Activated T-helper 2 cell treated with anti-CD3 and anti-CD28 coated beads, Interferon-gamma antibody, Interleukin-2, Interleukin-4, amounts not matched to agents 10 μg/mL and 5 μg/mL and 100 μg/mL, durations not matched to agents 14 hours and 24 hours and 36 hours (primary cell): ENCODE measurements at regions of chr12 and their contacts with region 1.

Region 1: GRCh38 chr12:52032804-52033502 is 18.3 kb upstream of the NR4A1 start:
- DNase-seq: peak; percentile 88
- H3K4me3 Mint-ChIP-seq: peak overlapping the region; percentile 73
- H3K27ac Mint-ChIP-seq: peak overlapping the region; percentile 81
- H3K4me1 Mint-ChIP-seq: peaks cover 34% of the 10 kb centered on the region
- H3K27me3 Mint-ChIP-seq: peaks cover 6% of the 10 kb centered on the region

Region 2: DNA sequence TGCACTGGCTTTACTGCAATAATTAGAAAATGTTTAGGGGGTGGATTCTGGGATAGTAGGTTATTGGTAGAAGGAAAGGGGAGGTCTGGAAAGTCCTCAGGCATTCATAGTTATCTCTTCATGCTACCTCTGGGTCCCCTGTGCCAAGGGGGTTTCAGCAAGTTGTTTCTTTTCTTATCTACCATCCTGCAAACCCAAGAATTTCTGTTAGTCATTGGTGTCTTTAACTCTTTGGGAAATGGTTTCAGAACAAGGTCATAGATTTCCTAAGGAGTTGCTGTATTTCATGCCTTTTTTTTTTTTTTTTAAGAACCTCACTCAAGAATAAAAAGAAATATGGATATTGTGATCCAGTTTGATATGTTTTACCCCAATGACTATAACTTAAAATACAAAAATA is 544.7 kb before region 1 on chr12:
- intact Hi-C with region 1: no loop called
- DNase-seq: no peak
- H3K4me3 Mint-ChIP-seq: no peak overlapping the region
- H3K27ac Mint-ChIP-seq: no peak overlapping the region
- H3K4me1 Mint-ChIP-seq: peaks cover 16% of the 10 kb centered on the region
- H3K27me3 Mint-ChIP-seq: no peaks in the 10 kb centered on the region

Region 3: DNA sequence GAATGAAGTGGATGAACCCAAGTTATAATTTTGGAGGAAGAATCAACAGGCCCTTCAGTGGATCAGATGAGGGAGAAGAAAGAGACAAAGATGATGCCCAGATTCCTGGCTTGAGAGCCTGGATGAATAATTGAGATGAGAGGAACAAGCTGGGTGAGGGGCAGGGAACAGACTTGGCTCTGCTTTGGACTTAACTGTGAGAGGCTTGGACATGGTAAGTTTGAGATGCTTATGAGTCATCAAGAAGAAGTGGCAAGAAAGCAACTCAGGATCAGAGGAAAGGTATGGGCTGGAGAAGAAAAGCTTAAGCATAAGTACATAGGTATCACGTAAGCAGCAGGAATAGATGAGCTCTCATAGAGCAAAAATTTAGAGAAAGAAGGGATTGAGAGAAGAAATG is 239.8 kb before region 1 on chr12:
- intact Hi-C with region 1: no loop called
- DNase-seq: no peak
- H3K4me3 Mint-ChIP-seq: no peak overlapping the region
- H3K27ac Mint-ChIP-seq: no peak overlapping the region
- H3K4me1 Mint-ChIP-seq: no peaks in the 10 kb centered on the region
- H3K27me3 Mint-ChIP-seq: no peaks in the 10 kb centered on the region

Region 4: DNA sequence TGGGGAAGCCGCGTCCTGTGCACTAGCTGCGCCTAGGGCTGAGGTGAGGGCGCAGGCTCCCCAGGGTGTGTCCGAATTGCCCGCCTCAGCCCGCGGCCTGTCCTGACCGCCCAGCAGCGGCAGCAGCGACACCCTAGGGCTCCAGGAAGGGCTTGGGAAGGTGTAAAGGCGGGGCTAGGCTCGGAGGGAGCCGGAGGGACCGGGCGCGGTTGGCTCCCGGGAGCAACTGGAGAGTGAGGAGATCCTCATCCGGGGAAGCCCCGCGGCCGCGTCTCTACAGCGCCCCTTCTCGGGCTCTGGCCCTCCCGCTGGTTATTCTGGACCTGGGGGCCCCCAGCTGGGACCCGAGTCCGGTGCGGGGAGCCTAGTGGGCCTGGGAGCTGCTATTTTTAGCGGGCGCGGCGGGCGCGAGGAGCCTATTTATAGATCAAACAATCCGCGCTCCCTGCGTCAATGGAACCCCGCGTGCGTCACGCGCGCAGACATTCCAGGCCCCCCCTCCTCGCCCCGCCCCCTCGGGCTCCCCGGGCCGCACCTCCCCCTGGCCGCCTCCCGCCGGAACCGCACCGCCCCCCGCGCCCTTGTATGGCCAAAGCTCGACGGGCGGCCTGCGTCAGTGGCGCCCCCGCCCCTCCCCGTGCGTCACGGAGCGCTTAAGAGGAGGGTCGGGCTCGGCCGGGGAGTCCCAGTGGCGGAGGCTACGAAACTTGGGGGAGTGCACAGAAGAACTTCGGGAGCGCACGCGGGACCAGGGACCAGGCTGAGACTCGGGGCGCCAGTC is 18.0 kb after region 1 on chr12 and contains the start of gene NR4A1:
- intact Hi-C with region 1: loop called (anchors 1 kb)
- DNase-seq: peak; percentile 94
- H3K4me3 Mint-ChIP-seq: peak within 1 kb of the TSS; percentile 98
- H3K27ac Mint-ChIP-seq: peak within 1 kb of the TSS; percentile 92
- H3K4me1 Mint-ChIP-seq: peaks cover 25% of the 10 kb centered on the region
- H3K27me3 Mint-ChIP-seq: no peaks in the 10 kb centered on the region
- total RNA-seq, gene NR4A1: 134 and 139 TPM in 2 replicates